Activated naive CD8-positive, alpha-beta T cell treated with anti-CD3 and anti-CD28 coated beads, Interleukin-2, amount 10 ng/mL, durations not matched to agents 7 days and 5 days (primary cell): ENCODE measurements at regions of chr11 and their contacts with region 1.

Region 1: DNA sequence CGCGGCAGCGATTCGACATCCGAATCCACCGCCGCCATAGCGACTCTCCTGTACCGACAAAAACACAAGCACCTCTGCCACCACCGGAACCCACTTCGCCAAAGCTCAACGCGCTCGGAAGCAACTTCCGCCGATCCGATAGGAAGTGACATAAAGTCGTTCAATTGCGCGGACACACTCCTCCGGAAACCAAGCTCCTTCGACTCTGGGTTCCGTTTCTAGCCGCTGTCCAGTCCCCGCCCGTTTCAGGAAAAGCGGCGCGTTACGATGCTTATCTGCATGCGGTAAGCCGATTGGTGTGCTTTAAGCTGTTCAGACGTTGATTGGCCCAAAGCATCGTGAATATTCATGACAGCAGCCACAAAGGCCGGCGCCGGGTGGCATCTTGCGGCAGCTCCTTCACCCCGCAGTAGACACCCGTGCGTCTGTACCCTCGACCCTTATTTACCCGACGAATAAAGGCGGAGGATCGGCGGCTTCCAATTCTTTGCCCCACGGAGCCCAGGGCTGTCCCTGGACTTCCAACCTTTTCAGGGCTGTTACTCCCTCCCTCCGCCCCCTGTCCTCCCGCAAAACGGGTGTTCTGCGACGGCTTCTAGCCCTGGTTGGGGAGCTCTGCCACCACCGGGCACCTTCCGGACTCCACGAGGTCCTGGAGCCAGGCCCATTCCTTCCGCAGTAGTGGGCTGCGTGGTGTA is at the start of gene TUT1:
- DNase-seq: peak; percentile 91
- ATAC-seq: peak; percentile 88
- H3K4me3 Mint-ChIP-seq: peak within 1 kb of the TSS; percentile 100
- H3K27ac Mint-ChIP-seq: peak within 1 kb of the TSS; percentile 99
- H3K4me1 Mint-ChIP-seq: peaks cover 38% of the 10 kb centered on the region
- H3K27me3 Mint-ChIP-seq: no peaks in the 10 kb centered on the region
- total RNA-seq, gene TUT1: 27.2 to 38.2 TPM

Region 2: DNA sequence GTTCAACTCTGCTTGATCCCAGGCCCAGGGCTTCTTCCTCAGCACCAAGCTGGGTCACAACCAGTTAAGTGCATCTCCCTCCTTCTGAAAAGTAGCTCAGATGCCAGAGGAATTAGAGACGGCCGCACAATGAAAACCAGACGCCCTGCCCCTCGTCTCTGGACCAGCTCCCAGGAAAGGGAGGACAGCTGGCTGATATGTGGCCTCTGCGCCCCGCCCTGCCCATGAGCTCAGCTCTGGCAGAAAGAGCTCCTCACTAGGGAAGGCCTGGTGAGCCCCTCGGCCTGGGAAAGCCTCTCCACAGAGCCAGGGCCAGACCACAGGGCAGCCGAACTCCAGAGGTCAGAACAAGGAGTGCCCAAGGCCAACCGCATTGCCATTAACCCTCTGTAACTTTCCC is 190.8 kb before region 1 on chr11:
- POLR2A ChIA-PET with region 1: interaction called, 11 read pairs
- DNase-seq: no peak
- ATAC-seq: no peak
- H3K4me3 Mint-ChIP-seq: no peak overlapping the region
- H3K27ac Mint-ChIP-seq: no peak overlapping the region
- H3K4me1 Mint-ChIP-seq: peaks cover 27% of the 10 kb centered on the region
- H3K27me3 Mint-ChIP-seq: no peaks in the 10 kb centered on the region

Region 3: DNA sequence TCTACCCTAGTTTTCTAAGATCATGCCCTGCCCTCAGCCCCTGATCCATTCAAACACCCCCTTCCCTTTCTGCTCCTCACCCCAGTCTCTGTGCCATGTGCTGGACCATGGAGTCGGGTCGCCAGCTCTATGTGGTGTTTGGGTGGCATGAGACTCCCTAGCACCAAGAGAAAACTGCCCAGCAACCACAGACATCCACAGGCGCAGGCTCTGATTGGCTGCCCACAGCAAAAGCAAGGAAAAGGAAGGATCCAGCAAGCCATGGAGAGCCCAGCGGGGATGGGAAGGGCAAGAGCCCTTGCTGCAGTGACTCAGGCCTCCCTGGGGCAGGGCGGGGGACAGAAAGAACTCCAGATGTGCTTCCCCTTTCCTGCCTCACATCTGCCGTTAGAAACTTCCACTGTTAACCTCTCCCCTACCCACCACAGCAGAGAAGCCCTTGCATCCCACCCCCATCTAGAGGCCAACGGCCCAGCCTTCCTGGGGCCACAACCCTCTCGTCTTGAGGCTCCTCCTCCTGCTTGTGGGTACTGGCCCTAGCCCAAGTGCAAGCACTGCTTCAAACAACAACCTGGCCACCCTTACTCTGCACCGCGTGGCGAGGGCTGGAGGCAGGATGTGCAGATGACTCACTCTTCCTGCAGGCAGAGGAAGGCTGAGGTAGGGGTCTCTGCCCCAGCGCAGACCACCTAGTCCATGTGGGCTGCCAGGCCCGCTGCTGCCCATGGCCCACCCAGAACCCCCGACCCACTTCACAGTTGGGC is 35.3 kb before region 1 on chr11:
- POLR2A ChIA-PET with region 1: interaction called, 27 read pairs
- DNase-seq: peak; percentile 87
- ATAC-seq: peak; percentile 79
- H3K4me3 Mint-ChIP-seq: peak overlapping the region; percentile 79
- H3K27ac Mint-ChIP-seq: peak overlapping the region; percentile 97
- H3K4me1 Mint-ChIP-seq: peaks cover 82% of the 10 kb centered on the region
- H3K27me3 Mint-ChIP-seq: no peaks in the 10 kb centered on the region

Region 4: GRCh38 chr11:62612366-62613290 is 21.0 kb after region 1 on chr11 and contains the starts of genes EML3 and ROM1:
- POLR2A ChIA-PET with region 1: interaction called, 50 read pairs
- DNase-seq: peak; percentile 96
- ATAC-seq: peak; percentile 74
- H3K4me3 Mint-ChIP-seq: peak within 1 kb of the TSS; percentile 90
- H3K27ac Mint-ChIP-seq: peak within 1 kb of the TSS; percentile 93
- H3K4me1 Mint-ChIP-seq: peaks cover 39% of the 10 kb centered on the region
- H3K27me3 Mint-ChIP-seq: no peaks in the 10 kb centered on the region
- total RNA-seq, gene EML3: 183 to 185 TPM
- total RNA-seq, gene ROM1: 1.4 to 2.4 TPM

Region 5: GRCh38 chr11:62645956-62646824 is 54.6 kb after region 1 on chr11 and contains the start of gene GANAB:
- POLR2A ChIA-PET with region 1: interaction called, 29 read pairs
- DNase-seq: peak; percentile 96
- ATAC-seq: peak; percentile 98
- H3K4me3 Mint-ChIP-seq: peak within 1 kb of the TSS; percentile 99
- H3K27ac Mint-ChIP-seq: peak within 1 kb of the TSS; percentile 96
- H3K4me1 Mint-ChIP-seq: peaks cover 24% of the 10 kb centered on the region
- H3K27me3 Mint-ChIP-seq: no peaks in the 10 kb centered on the region
- total RNA-seq, gene GANAB: 291 to 300 TPM

Region 6: GRCh38 chr11:62671575-62672389 is 80.2 kb after region 1 on chr11 and contains the starts of genes LBHD1 and UQCC3:
- POLR2A ChIA-PET with region 1: interaction called, 82 read pairs
- DNase-seq: peak; percentile 84
- ATAC-seq: peak; percentile 87
- H3K4me3 Mint-ChIP-seq: peak within 1 kb of the TSS; percentile 94
- H3K27ac Mint-ChIP-seq: peak within 1 kb of the TSS; percentile 91
- H3K4me1 Mint-ChIP-seq: peaks cover 35% of the 10 kb centered on the region
- H3K27me3 Mint-ChIP-seq: no peaks in the 10 kb centered on the region
- total RNA-seq, gene LBHD1: 23.5 to 23.6 TPM
- total RNA-seq, gene UQCC3: 6.7 to 6.8 TPM

Region 7: GRCh38 chr11:62705880-62706849 is 114.6 kb after region 1 on chr11:
- POLR2A ChIA-PET with region 1: interaction called, 44 read pairs
- DNase-seq: peak; percentile 95
- ATAC-seq: peak; percentile 43
- H3K4me3 Mint-ChIP-seq: peak overlapping the region; percentile 91
- H3K27ac Mint-ChIP-seq: peak overlapping the region; percentile 73
- H3K4me1 Mint-ChIP-seq: peaks cover 39% of the 10 kb centered on the region
- H3K27me3 Mint-ChIP-seq: no peaks in the 10 kb centered on the region